HEK293 (cell line): ENCODE measurements at regions of chr5 and their contacts with region 1.

Region 1: GRCh38 chr5:80083101-80083890 is 48.1 kb downstream of the THBS4 start:
- H3K4me3 ChIP-seq: no peak overlapping the region
- H3K27ac ChIP-seq: no peak overlapping the region
- H3K4me1 ChIP-seq: no peaks in the 10 kb centered on the region
- CTCF ChIP-seq: peak; percentile 42; the same call in 1 of the 2 replicates

Region 2: DNA sequence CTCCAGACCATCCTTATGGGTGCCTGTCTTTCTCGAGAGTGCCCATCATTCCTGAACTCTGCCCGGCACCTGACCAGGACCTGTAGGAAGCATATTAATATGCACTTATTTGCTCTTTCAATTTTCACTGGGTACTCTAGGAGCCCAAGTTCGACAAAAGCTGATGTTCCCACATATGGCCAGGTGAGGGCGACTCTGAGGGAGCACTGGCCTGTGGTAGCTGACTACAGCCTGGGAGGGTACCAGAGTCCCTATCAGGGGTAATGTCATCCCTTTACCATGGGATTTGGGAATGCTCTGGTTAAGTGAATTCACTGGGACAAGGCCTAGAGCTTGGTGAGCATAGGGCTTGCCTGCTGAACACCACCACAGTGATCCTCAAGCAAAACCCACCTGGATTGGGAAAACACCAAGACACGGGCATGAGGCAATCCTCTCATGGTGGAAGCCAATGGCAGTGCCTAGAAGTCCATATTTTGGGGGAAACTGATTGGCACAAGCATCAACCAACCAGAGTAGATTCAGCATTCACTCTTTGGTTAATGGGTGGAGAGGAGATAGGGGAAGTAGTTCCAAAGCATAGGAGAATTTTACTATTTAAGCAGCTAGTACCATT is 204.5 kb before region 1 on chr5:
- CTCF ChIA-PET with region 1: interaction called, 25 read pairs
- POLR2A ChIA-PET with region 1: no interaction called
- H3K4me3 ChIP-seq: no peak overlapping the region
- H3K27ac ChIP-seq: no peak overlapping the region
- H3K4me1 ChIP-seq: no peaks in the 10 kb centered on the region
- CTCF ChIP-seq: no peak